ENCODE measurements at regions of chr7 and their contacts with region 1.

Region 1: DNA sequence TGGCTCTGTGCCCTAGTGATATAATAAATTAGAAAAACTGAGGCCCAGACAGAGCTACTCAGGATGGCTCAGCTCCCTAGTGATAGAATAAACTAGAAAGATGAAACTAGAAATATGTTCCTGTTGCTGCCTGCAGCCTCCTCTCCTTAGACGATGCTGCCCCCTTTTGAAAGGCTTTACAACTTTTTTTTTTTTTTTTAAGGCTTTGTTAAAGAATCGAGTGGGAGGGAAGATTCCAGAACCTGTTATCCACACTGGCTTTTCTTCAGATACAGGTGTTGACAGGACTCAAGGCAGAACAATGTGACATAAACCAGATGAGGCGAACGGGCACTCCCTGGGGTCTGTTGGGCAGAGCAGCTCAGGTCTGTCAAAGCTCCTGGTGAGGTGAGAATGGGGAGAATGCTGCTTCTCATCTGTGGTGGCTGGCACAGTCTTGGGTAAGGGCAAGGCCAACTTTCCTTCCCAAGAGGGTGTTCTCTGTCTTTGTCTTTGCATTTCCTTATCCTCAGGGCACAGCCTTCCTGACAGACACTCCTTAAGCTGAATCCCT is 175.1 kb downstream of the COBL start:
- DNase-seq: no peak
- ATAC-seq: peak; percentile 55 to 81 (median 72)
- H3K4me3 ChIP-seq: no peak overlapping the region
- H3K27ac ChIP-seq: peak overlapping the region in 9 of 12 donors; percentile 23 to 69 (median 56)
- H3K4me1 ChIP-seq: peaks cover 2 to 44% (median 24%) of the 10 kb centered on the region in 12 donors
- H3K27me3 ChIP-seq: no peaks in the 10 kb centered on the region
- CTCF ChIP-seq: peak; percentile 43 to 81 (median 66)
- POLR2A ChIP-seq: no peak

Region 2: GRCh38 chr7:50467817-50468610 is 673.5 kb before region 1 on chr7:
- intact Hi-C with region 1: loop called in 6 of 10 experiments (anchors 5 kb)
- DNase-seq: peak; percentile 72 to 89 (median 80)
- ATAC-seq: peak; percentile 70 to 97 (median 90)
- H3K4me3 ChIP-seq: peak overlapping the region in 1 of 12 donors; percentile 12
- H3K27ac ChIP-seq: no peak overlapping the region
- H3K4me1 ChIP-seq: peaks cover 0 to 8% (median 0%) of the 10 kb centered on the region in 12 donors
- H3K27me3 ChIP-seq: peaks cover 0 to 5% (median 0%) of the 10 kb centered on the region in 9 donors
- CTCF ChIP-seq: peak; percentile 85 to 96 (median 89)
- POLR2A ChIP-seq: no peak

Region 3: DNA sequence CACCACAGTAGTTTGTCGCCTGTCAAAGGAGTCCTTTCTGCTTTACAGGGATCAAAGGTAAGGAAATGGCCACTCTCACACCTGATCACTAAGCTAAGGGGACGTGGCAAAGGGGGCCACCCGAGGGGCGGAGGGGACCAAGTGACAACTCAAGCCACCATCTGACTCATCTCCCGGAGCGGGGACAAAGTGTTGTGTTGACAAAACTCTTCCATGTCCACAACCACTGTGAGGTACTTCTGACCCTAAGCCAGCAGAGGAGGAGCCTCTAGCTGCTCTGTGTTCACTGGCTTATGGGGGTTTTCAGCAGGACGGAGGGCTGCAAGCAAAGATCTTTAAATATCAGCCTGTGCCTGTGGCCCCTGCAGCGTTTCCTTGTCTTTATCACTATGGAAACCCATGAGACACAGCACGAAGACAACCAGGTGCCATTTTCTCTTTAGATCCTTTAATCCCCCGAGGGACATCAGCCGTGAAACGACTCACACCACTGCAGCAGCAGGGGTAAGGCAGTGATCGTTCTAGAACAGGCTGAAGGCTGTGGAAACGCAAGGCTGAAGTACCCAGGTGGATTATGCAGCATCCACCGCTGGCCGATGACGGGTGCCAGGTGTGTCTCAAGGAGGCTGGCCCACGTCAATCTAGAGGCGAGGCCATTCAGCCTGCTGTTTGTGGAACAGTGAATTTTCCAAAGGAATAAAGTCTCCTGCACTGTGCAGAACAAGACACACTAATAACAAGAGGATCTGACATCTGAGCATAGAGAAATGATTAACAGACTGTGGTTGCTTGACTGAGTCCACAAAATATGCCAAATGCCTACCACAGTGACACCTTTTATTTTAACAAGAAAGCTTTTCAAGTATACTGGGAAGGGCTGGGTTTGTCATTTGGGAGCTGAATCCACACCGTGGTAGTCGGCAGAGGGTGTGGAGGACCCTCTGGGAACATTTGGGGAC is 549.8 kb before region 1 on chr7:
- intact Hi-C with region 1: no loop called
- DNase-seq: no peak
- ATAC-seq: no peak
- H3K4me3 ChIP-seq: no peak overlapping the region
- H3K27ac ChIP-seq: no peak overlapping the region
- H3K4me1 ChIP-seq: no peaks in the 10 kb centered on the region
- H3K27me3 ChIP-seq: no peaks in the 10 kb centered on the region
- CTCF ChIP-seq: no peak
- POLR2A ChIP-seq: no peak

Region 4: GRCh38 chr7:50679218-50680007 is 462.1 kb before region 1 on chr7:
- intact Hi-C with region 1: loop called in 5 of 10 experiments (anchors 5 to 10 kb)
- DNase-seq: no peak
- ATAC-seq: peak; percentile 72 to 77 (median 73)
- H3K4me3 ChIP-seq: no peak overlapping the region
- H3K27ac ChIP-seq: peak overlapping the region in 2 of 12 donors; percentile 1 to 72
- H3K4me1 ChIP-seq: peaks cover 0 to 80% (median 57%) of the 10 kb centered on the region in 12 donors
- H3K27me3 ChIP-seq: no peaks in the 10 kb centered on the region
- CTCF ChIP-seq: peak in 11 of 12 donors; percentile 21 to 60 (median 47)
- POLR2A ChIP-seq: no peak

Region 5: GRCh38 chr7:50696810-50697582 is 444.5 kb before region 1 on chr7:
- intact Hi-C with region 1: loop called in 1 of 10 experiments (anchors 10 kb)
- DNase-seq: no peak
- ATAC-seq: no peak
- H3K4me3 ChIP-seq: no peak overlapping the region
- H3K27ac ChIP-seq: peak overlapping the region in 1 of 12 donors; percentile 43
- H3K4me1 ChIP-seq: peaks cover 0 to 45% (median 15%) of the 10 kb centered on the region in 12 donors
- H3K27me3 ChIP-seq: no peaks in the 10 kb centered on the region
- CTCF ChIP-seq: peak in 10 of 12 donors; percentile 17 to 53 (median 40)
- POLR2A ChIP-seq: no peak

Region 6: GRCh38 chr7:50793115-50793946 is 348.2 kb before region 1 on chr7:
- intact Hi-C with region 1: loop called in 8 of 10 experiments (anchors 5 to 10 kb)
- DNase-seq: peak; percentile 82 to 87 (median 84)
- ATAC-seq: peak; percentile 44 to 88 (median 76)
- H3K4me3 ChIP-seq: peak overlapping the region in 11 of 12 donors; percentile 36 to 94 (median 70)
- H3K27ac ChIP-seq: peak overlapping the region; percentile 64 to 94 (median 85)
- H3K4me1 ChIP-seq: peaks cover 3 to 46% (median 27%) of the 10 kb centered on the region in 12 donors
- H3K27me3 ChIP-seq: no peaks in the 10 kb centered on the region
- CTCF ChIP-seq: peak in 1 of 12 donors; percentile 1
- POLR2A ChIP-seq: peak in 1 of 2 donors; percentile 20

Region 7: DNA sequence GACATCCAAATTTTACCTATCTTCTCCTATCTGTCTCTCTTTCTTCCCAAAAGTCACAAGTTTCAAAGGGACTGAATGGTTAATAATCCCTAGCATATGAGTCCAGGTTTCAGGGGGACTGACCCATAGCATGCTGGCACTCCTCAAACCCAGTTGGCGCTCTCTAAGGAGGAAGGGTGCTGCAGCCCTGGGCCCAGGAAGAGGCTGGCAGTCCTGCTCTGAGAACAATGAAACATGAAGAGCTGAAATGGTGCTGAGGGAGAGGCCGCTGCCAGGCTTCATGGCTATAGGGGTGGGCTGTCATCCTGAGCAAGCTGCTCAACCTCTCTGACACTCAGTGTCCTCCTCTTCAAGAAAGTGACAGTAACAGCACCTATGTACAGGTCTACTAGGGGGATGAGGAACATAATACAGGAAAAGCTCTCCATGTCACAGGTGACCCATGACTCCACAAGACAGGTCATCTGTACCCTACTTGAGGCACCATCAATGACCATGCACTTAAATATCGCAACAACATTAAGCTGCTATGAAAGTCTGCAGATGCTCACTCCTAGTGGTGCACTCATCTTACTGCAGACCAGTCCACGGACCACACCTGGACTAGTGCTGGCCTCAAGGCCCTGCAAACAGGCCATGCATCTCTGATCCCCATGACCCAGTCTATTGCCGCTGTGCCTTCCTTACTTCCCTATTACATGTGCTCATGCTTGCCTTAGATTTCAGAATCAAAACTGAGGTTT is 158.0 kb after region 1 on chr7:
- intact Hi-C with region 1: no loop called
- DNase-seq: no peak
- ATAC-seq: no peak
- H3K4me3 ChIP-seq: no peak overlapping the region
- H3K27ac ChIP-seq: peak overlapping the region in 1 of 12 donors; percentile 79
- H3K4me1 ChIP-seq: peaks cover 0 to 46% (median 17%) of the 10 kb centered on the region in 12 donors
- H3K27me3 ChIP-seq: no peaks in the 10 kb centered on the region
- CTCF ChIP-seq: peak in 1 of 12 donors; percentile 11
- POLR2A ChIP-seq: no peak

Measured in heart left ventricle (tissue), 16 donors.